ENCODE measurements at regions of chr2 and their contacts with region 1.

Region 1: GRCh38 chr2:239991689-239992314 is 33.3 kb downstream of the NDUFA10 start:
- H3K4me3 Mint-ChIP-seq: no peak overlapping the region
- H3K27ac Mint-ChIP-seq: no peak overlapping the region
- H3K4me1 Mint-ChIP-seq: no peaks in the 10 kb centered on the region
- H3K27me3 Mint-ChIP-seq: no peaks in the 10 kb centered on the region

Region 2: GRCh38 chr2:239380831-239381708 is 610.7 kb before region 1 on chr2:
- intact Hi-C with region 1: loop called (anchors 10 kb)
- H3K4me3 Mint-ChIP-seq: peak overlapping the region; percentile 52
- H3K27ac Mint-ChIP-seq: peak overlapping the region; percentile 50
- H3K4me1 Mint-ChIP-seq: peaks cover 54% of the 10 kb centered on the region
- H3K27me3 Mint-ChIP-seq: no peaks in the 10 kb centered on the region

Region 3: GRCh38 chr2:239889641-239890121 is 102.1 kb before region 1 on chr2:
- intact Hi-C with region 1: no loop called
- H3K4me3 Mint-ChIP-seq: no peak overlapping the region
- H3K27ac Mint-ChIP-seq: peak overlapping the region; percentile 35
- H3K4me1 Mint-ChIP-seq: peaks cover 44% of the 10 kb centered on the region
- H3K27me3 Mint-ChIP-seq: peaks cover 3% of the 10 kb centered on the region

Region 4: GRCh38 chr2:239934571-239935171 is 57.1 kb before region 1 on chr2:
- intact Hi-C with region 1: loop called (anchors 1 kb)
- H3K4me3 Mint-ChIP-seq: no peak overlapping the region
- H3K27ac Mint-ChIP-seq: no peak overlapping the region
- H3K4me1 Mint-ChIP-seq: peaks cover 47% of the 10 kb centered on the region
- H3K27me3 Mint-ChIP-seq: peaks cover 9% of the 10 kb centered on the region

Measured in dendritic cell treated with granulocyte-macrophage colony-stimulating factor and Interleukin-4, amounts not matched to agents 40 ng/mL and 50 ng/mL, for 4 days (primary cell).